ENCODE measurements at regions of chr11 and their contacts with region 1.

Region 1: GRCh38 chr11:66752148-66752547 is 23.1 kb upstream of the SPTBN2 start:
- DNase-seq: no peak
- H3K4me3 Mint-ChIP-seq: no peak overlapping the region
- H3K27ac Mint-ChIP-seq: no peak overlapping the region
- H3K4me1 Mint-ChIP-seq: no peaks in the 10 kb centered on the region
- H3K27me3 Mint-ChIP-seq: no peaks in the 10 kb centered on the region

Region 2: DNA sequence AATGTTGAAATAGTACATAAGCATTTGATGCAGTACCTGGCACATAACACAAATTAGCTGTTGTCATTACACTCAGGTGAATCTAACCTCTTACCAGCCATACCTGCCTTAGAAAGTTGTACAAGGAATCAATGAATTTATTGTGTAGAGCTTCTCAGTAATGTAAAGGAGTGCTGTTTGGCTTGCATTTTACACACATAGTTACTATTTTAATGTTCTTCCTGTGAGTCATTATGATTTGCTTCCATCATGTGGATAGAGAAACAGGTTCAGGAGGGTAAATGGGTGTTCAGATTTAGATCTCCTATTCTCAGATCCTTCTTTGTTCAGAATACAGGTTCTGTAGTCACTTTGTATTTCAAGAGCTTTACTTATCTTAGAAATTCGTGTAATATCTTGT is 63.5 kb after region 1 on chr11:
- intact Hi-C with region 1: loop called (anchors 10 kb)
- DNase-seq: no peak
- H3K4me3 Mint-ChIP-seq: no peak overlapping the region
- H3K27ac Mint-ChIP-seq: no peak overlapping the region
- H3K4me1 Mint-ChIP-seq: peaks cover 7% of the 10 kb centered on the region
- H3K27me3 Mint-ChIP-seq: no peaks in the 10 kb centered on the region

Measured in activated T-helper 2 cell treated with anti-CD3 and anti-CD28 coated beads, Interferon-gamma antibody, Interleukin-2, Interleukin-4, amounts not matched to agents 10 μg/mL and 5 μg/mL and 100 μg/mL, durations not matched to agents 14 hours and 24 hours and 36 hours (primary cell).